Caco-2 (cell line): ENCODE measurements at regions of chr4 and their contacts with region 1.

Region 1: DNA sequence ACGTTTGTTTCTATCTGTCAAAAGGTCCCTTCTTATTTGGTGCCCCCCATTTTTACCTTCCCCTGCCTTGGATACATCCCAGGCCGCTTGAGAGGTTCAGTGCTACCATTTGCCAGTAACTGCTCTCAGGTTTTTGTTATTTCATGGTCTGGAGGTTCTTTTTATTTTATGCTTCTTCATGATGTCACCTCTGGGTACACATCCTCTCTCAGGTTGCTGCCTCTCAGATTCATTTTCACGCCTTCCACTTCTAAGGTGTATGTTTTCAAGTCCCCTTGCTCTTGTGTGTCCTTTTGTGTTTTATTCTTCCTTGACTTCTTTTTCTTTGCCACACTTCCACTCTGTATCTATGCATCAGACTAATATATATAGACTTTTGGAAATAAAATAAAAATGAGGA is 640.1 kb upstream of the AADAT start:
- DNase-seq: no peak
- H3K4me3 ChIP-seq: no peak overlapping the region
- H3K4me3 Mint-ChIP-seq: no peak overlapping the region
- H3K27ac Mint-ChIP-seq: no peak overlapping the region
- H3K4me1 ChIP-seq: no peaks in the 10 kb centered on the region
- H3K4me1 Mint-ChIP-seq: no peaks in the 10 kb centered on the region
- H3K27me3 ChIP-seq: no peaks in the 10 kb centered on the region
- H3K27me3 Mint-ChIP-seq: no peaks in the 10 kb centered on the region
- CTCF ChIP-seq: no peak

Region 2: DNA sequence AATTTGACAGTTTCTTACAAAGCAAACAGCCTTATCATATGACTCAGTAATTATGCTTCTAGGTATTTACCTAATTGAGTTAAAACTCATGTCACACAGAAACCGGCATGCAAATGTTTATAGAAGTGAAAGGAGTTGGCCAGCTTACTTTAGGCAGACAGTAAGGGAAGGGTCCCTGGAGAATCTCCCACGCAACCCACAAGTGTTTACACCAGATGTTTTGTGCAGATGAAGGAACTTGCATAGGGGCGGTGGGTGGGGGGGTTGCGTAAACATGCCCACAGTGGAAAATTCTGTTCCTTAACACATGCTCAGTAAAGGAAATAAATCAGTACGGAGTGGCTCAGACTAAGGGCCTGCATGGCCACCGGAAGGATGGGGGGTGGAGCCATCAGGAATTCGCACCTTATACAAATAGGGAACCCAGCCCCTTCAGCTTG is 309.6 kb before region 1 on chr4:
- CTCF ChIA-PET with region 1: no interaction called
- POLR2A ChIA-PET with region 1: no interaction called
- intact Hi-C with region 1: no loop called
- DNase-seq: no peak
- H3K4me3 ChIP-seq: no peak overlapping the region
- H3K4me3 Mint-ChIP-seq: no peak overlapping the region
- H3K27ac Mint-ChIP-seq: no peak overlapping the region
- H3K4me1 ChIP-seq: no peaks in the 10 kb centered on the region
- H3K4me1 Mint-ChIP-seq: no peaks in the 10 kb centered on the region
- H3K27me3 ChIP-seq: no peaks in the 10 kb centered on the region
- H3K27me3 Mint-ChIP-seq: no peaks in the 10 kb centered on the region
- CTCF ChIP-seq: no peak

Region 3: DNA sequence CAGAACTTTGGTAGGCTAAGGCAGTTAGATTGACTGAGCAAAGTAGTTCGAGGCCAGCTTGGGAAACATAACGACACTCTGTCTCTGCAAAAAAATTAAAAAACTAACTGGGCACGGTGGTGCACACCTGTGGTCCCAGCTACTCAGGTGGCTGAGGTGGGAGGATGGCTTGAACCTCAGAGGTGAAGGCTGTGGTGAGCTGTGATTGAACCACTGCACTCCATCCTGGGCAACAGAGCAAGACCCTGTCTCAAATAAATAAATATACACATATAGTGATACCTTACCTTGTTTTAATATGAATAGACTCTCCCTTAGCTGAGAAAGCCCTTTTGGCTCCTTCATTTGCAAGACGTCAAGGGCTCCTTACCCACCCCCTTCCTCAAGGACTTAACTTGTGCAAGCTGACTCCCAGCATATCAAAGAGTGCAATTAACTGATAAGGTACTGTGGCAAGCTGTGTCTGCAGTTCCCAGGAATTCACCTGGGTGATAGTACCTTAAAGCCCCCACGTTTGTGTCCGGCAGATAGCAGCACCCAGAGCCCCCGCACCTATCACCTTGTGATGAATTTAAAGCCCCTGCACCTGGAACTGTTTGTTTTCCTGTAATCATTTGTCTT is 427.7 kb after region 1 on chr4:
- CTCF ChIA-PET with region 1: no interaction called
- POLR2A ChIA-PET with region 1: no interaction called
- intact Hi-C with region 1: no loop called
- DNase-seq: peak; percentile 1 to 25
- H3K4me3 ChIP-seq: no peak overlapping the region
- H3K4me3 Mint-ChIP-seq: no peak overlapping the region
- H3K27ac Mint-ChIP-seq: no peak overlapping the region
- H3K4me1 ChIP-seq: no peaks in the 10 kb centered on the region
- H3K4me1 Mint-ChIP-seq: no peaks in the 10 kb centered on the region
- H3K27me3 ChIP-seq: no peaks in the 10 kb centered on the region
- H3K27me3 Mint-ChIP-seq: peaks cover under 1% of the 10 kb centered on the region
- CTCF ChIP-seq: no peak

Region 4: DNA sequence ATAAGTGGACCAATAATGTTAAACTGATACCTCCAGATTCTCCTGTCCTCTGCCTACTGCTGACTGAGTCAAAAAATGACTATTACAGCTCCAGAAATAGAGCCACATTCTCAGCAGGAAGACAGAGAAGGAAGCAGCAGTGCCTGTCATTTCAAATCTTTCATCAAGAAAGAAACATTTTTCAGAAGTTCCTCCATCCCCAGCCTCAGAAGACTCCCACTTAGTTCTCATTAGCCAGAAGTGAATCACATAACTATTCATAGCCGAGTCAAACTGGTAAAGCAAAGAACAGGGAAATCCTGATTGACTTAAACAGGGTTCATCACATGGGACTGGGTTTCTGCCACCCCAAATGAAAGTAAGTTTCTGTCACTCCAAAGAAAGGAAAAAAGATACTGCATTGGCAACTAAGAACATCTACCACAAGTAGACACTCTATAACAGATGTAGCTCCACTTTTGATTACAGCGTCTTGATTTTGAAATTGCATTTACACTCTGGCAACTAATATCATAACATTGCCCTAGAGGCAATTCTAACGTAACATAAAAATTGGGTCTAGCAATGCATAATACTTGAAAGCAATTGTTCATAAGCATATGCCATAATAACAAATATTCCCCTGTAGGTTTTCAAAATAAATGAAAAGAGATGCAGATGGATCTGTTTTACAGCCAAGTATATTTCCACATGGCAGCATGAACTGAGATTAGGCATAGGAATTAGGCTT is 1683.1 kb after region 1 on chr4:
- CTCF ChIA-PET with region 1: no interaction called
- POLR2A ChIA-PET with region 1: no interaction called
- intact Hi-C with region 1: loop called (anchors 5 kb)
- DNase-seq: no peak
- H3K4me3 ChIP-seq: no peak overlapping the region
- H3K4me3 Mint-ChIP-seq: no peak overlapping the region
- H3K27ac Mint-ChIP-seq: no peak overlapping the region
- H3K4me1 ChIP-seq: no peaks in the 10 kb centered on the region
- H3K4me1 Mint-ChIP-seq: no peaks in the 10 kb centered on the region
- H3K27me3 ChIP-seq: no peaks in the 10 kb centered on the region
- H3K27me3 Mint-ChIP-seq: no peaks in the 10 kb centered on the region
- CTCF ChIP-seq: no peak